Mammary epithelial cell (primary cell): ENCODE measurements at regions of chr5 and their contacts with region 1.

Region 1: GRCh38 chr5:139273572-139274289 is 19.8 kb upstream of the MATR3 start:
- DNase-seq: peak; percentile 87
- H3K4me3 ChIP-seq: peak overlapping the region; percentile 65 to 87 (median 81)
- H3K27ac ChIP-seq: peak overlapping the region; percentile 81
- H3K4me1 ChIP-seq: peaks cover 51% of the 10 kb centered on the region
- H3K27me3 ChIP-seq: no peaks in the 10 kb centered on the region
- CTCF ChIP-seq: peak in 1 of 2 donors; percentile 12

Region 2: GRCh38 chr5:138874771-138875551 is 398.8 kb before region 1 on chr5 and contains the start of gene LRRTM2:
- CTCF ChIA-PET with region 1: no interaction called
- dilution Hi-C with region 1: no loop called
- in situ Hi-C with region 1: loop called in 1 of 2 experiments (anchors 25 kb)
- intact Hi-C with region 1: no loop called
- DNase-seq: peak; percentile 82
- H3K4me3 ChIP-seq: peak within 1 kb of the TSS; percentile 30 to 44 (median 40)
- H3K27ac ChIP-seq: peak within 1 kb of the TSS; percentile 54
- H3K4me1 ChIP-seq: peaks cover 52% of the 10 kb centered on the region
- H3K27me3 ChIP-seq: no peaks in the 10 kb centered on the region
- CTCF ChIP-seq: no peak
- total RNA-seq, gene LRRTM2: 1.1 to 1.2 TPM

Region 3: GRCh38 chr5:139293504-139294373 is 20.0 kb after region 1 on chr5 and contains the start of gene MATR3:
- CTCF ChIA-PET with region 1: no interaction called
- dilution Hi-C with region 1: no loop called
- in situ Hi-C with region 1: no loop called
- intact Hi-C with region 1: loop called (anchors 1 kb)
- DNase-seq: peak; percentile 96
- H3K4me3 ChIP-seq: peak within 1 kb of the TSS; percentile 68 to 90 (median 85)
- H3K27ac ChIP-seq: peak within 1 kb of the TSS; percentile 91
- H3K4me1 ChIP-seq: peaks cover 8% of the 10 kb centered on the region
- H3K27me3 ChIP-seq: no peaks in the 10 kb centered on the region
- CTCF ChIP-seq: no peak
- total RNA-seq, gene MATR3: 118 to 185 TPM

Region 4: DNA sequence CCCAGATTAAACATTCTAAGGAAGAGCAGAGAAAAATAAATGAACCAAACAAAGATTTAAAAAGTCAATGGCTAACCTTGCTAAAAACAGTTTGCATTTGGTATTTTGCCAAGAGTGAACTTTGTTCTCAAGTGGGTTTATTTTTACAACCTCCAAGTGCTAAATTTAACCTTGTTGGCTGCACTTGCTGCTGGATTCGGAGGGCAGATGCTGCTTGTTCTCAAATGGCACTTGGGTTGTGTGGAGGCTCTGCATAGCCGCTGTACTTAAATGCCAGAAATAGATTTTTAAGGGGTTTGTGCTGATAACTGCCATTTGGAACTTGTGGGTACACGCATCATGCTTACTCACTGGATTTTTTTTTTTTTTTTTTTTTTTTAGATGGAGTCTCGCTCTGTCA is 143.5 kb after region 1 on chr5:
- CTCF ChIA-PET with region 1: no interaction called
- dilution Hi-C with region 1: no loop called
- in situ Hi-C with region 1: no loop called
- intact Hi-C with region 1: no loop called
- DNase-seq: no peak
- H3K4me3 ChIP-seq: no peak overlapping the region
- H3K27ac ChIP-seq: no peak overlapping the region
- H3K4me1 ChIP-seq: peaks cover 18% of the 10 kb centered on the region
- H3K27me3 ChIP-seq: no peaks in the 10 kb centered on the region
- CTCF ChIP-seq: no peak